Naive thymus-derived CD4-positive, alpha-beta T cell (primary cell): ENCODE measurements at regions of chr7 and their contacts with region 1.

Region 1: GRCh38 chr7:152145853-152146466 is 120.5 kb downstream of the GALNT11 start:
- DNase-seq: peak in 7 of 9 donors; percentile 30 to 60 (median 54)
- ATAC-seq: peak; percentile 63
- H3K4me3 ChIP-seq: no peak overlapping the region
- H3K4me3 Mint-ChIP-seq: peak overlapping the region; percentile 17 to 77 (median 68)
- H3K27ac ChIP-seq: peak overlapping the region; percentile 69
- H3K27ac Mint-ChIP-seq: peak overlapping the region; percentile 88 to 97 (median 93)
- H3K4me1 ChIP-seq: peaks cover 25 to 43% of the 10 kb centered on the region in 2 donors
- H3K4me1 Mint-ChIP-seq: peaks cover 36 to 51% (median 49%) of the 10 kb centered on the region in 7 donors
- H3K27me3 ChIP-seq: no peaks in the 10 kb centered on the region
- H3K27me3 Mint-ChIP-seq: no peaks in the 10 kb centered on the region

Region 2: DNA sequence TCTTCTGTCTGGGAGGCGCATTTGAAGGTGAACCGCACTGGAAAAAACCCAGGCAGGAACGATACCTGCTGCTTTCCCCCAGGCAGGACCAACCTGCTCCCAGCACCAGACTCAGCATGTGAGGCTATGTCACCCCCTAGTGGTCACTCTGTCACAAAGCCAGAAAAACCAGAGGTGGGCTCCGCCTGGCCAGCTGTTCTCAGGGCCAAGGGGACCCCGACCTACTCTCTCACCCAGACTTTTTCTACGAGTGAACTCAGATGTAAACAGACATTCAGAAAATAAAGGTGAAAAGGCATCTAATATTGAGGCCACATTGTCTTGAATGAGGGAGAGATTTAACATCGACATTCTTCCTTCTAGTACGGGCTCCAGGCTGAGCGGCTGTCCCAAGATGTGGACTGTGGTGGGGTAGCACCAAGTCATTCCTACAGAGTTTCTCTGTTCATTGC is 386.3 kb before region 1 on chr7:
- CTCF ChIA-PET with region 1: no interaction called
- POLR2A ChIA-PET with region 1: no interaction called
- intact Hi-C with region 1: loop called in 1 of 2 experiments (anchors 5 kb)
- DNase-seq: peak in 8 of 9 donors; percentile 38 to 67 (median 58)
- ATAC-seq: peak; percentile 67
- H3K4me3 ChIP-seq: no peak overlapping the region
- H3K4me3 Mint-ChIP-seq: no peak overlapping the region
- H3K27ac ChIP-seq: no peak overlapping the region
- H3K27ac Mint-ChIP-seq: peak overlapping the region in 6 of 9 donors; percentile 8 to 83 (median 56)
- H3K4me1 ChIP-seq: peaks cover 12 to 22% of the 10 kb centered on the region in 2 donors
- H3K4me1 Mint-ChIP-seq: peaks cover 17 to 60% (median 33%) of the 10 kb centered on the region in 7 donors
- H3K27me3 ChIP-seq: no peaks in the 10 kb centered on the region
- H3K27me3 Mint-ChIP-seq: no peaks in the 10 kb centered on the region

Region 3: DNA sequence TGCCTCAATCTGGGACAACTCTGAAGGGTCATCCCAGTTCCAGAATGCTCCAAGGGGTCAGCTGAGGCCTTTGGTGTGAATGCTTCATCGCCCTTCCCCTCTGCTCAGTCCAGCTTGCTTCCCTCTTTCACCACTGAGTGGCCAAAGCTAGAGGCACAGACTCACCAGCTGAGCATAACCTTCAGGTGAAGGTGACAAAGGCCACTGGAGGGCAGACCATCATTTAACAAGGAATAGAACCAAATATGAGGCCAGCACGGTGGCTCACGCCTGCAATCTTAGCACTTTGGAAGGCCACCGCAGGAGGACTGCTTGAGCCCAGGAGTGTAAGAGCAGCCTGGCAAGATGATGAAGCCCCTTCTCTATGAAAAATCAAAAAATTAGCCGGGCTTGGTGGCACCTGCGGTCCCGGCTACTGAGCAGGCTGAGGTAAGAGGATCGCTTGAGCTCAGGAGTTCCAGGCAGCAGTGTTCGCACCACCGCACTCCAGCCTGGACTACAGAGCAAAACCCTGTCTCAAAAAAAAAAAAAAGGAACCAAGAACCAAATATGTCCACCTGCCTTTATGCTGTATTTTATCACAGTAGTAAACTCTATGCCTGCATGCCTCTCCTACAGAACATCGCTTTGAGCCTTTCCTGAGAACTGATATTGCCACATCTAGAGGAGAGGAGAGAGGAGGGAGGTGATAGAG is 282.4 kb before region 1 on chr7:
- CTCF ChIA-PET with region 1: no interaction called
- POLR2A ChIA-PET with region 1: no interaction called
- intact Hi-C with region 1: loop called in 1 of 2 experiments (anchors 1 kb)
- DNase-seq: no peak
- ATAC-seq: peak; percentile 35
- H3K4me3 ChIP-seq: no peak overlapping the region
- H3K4me3 Mint-ChIP-seq: no peak overlapping the region
- H3K27ac ChIP-seq: no peak overlapping the region
- H3K27ac Mint-ChIP-seq: peak overlapping the region in 2 of 9 donors; percentile 41 to 51
- H3K4me1 ChIP-seq: no peaks in the 10 kb centered on the region
- H3K4me1 Mint-ChIP-seq: peaks cover 0 to 48% (median 42%) of the 10 kb centered on the region in 7 donors
- H3K27me3 ChIP-seq: no peaks in the 10 kb centered on the region
- H3K27me3 Mint-ChIP-seq: no peaks in the 10 kb centered on the region

Region 4: DNA sequence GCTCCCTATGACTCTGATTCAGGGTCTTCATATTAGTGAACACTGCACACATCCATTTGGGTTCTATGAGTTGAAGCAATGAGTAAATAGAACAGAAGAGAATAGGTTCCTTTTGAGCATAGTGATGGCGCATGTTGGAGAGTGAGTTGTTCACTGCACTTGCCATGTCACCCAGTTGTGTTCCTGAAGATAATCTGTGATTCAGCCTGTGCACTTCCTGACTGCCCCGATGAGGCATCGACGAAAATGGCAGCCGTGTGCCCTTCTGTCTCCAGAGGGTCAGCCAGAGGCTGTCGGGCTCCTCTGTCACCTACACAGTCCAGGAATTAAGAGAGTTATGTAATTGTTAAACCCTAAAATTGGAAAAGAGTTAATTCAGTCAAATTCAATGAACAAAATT is 25.8 kb before region 1 on chr7:
- CTCF ChIA-PET with region 1: no interaction called
- POLR2A ChIA-PET with region 1: no interaction called
- intact Hi-C with region 1: no loop called
- DNase-seq: no peak
- ATAC-seq: no peak
- H3K4me3 ChIP-seq: no peak overlapping the region
- H3K4me3 Mint-ChIP-seq: no peak overlapping the region
- H3K27ac ChIP-seq: no peak overlapping the region
- H3K27ac Mint-ChIP-seq: peak overlapping the region in 3 of 9 donors; percentile 6 to 62 (median 21)
- H3K4me1 ChIP-seq: peaks cover 0 to 3% of the 10 kb centered on the region in 2 donors
- H3K4me1 Mint-ChIP-seq: peaks cover 7 to 23% (median 18%) of the 10 kb centered on the region in 7 donors
- H3K27me3 ChIP-seq: no peaks in the 10 kb centered on the region
- H3K27me3 Mint-ChIP-seq: no peaks in the 10 kb centered on the region

Region 5: GRCh38 chr7:152158801-152159587 is 13.0 kb after region 1 on chr7:
- CTCF ChIA-PET with region 1: interaction called, 3 read pairs
- POLR2A ChIA-PET with region 1: interaction called, 12 read pairs
- intact Hi-C with region 1: loop called in 1 of 2 experiments (anchors 2 kb)
- DNase-seq: no peak
- ATAC-seq: peak; percentile 54
- H3K4me3 ChIP-seq: no peak overlapping the region
- H3K4me3 Mint-ChIP-seq: peak overlapping the region in 9 of 10 donors; percentile 26 to 58 (median 47)
- H3K27ac ChIP-seq: no peak overlapping the region
- H3K27ac Mint-ChIP-seq: peak overlapping the region; percentile 37 to 93 (median 84)
- H3K4me1 ChIP-seq: no peaks in the 10 kb centered on the region
- H3K4me1 Mint-ChIP-seq: peaks cover 8 to 15% (median 12%) of the 10 kb centered on the region in 7 donors
- H3K27me3 ChIP-seq: no peaks in the 10 kb centered on the region
- H3K27me3 Mint-ChIP-seq: no peaks in the 10 kb centered on the region

Region 6: DNA sequence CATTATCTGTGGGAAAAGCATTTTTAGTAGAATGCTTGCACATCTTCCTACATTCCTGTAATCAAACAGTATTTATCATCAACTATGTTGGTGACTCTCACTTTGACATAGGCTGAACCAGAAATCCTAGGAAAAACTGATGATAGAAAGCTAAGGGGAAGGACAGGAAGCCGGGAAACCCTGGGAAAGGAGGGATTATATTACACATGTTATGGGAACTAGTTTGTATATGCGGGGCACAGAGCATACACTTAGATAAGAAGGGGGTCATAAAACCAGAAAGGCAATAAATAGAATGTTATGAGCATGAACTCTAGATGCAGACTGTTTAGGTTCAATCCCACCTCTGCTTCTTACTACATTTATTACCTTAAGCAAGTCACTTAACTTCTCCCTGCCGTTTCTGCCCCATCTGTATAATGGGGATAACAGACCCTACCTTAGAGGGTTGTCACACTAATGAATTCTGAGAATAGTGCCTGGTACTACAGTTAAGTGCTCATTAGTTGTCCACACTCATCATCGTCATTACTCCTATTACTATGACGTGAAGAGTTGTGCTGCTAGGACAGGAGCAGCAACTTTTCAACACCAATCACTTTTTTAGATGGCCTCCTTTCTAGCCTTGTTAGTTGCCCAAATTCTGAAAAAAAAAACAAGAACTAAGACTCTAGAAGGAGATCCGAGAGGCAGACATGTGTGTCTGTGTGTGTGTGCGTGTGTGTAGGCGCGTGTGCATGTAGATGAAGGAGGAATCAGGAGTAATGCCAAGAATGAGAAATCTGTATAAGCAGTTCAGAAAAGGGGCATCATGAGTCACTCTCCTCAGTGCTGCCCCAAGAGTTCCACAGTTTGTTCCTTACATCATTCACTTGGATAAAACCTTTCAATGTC is 237.6 kb after region 1 on chr7:
- CTCF ChIA-PET with region 1: no interaction called
- POLR2A ChIA-PET with region 1: no interaction called
- intact Hi-C with region 1: no loop called
- DNase-seq: no peak
- ATAC-seq: peak; percentile 53
- H3K4me3 ChIP-seq: no peak overlapping the region
- H3K4me3 Mint-ChIP-seq: no peak overlapping the region
- H3K27ac ChIP-seq: no peak overlapping the region
- H3K27ac Mint-ChIP-seq: no peak overlapping the region
- H3K4me1 ChIP-seq: no peaks in the 10 kb centered on the region
- H3K4me1 Mint-ChIP-seq: peaks cover 4 to 37% (median 23%) of the 10 kb centered on the region in 7 donors
- H3K27me3 ChIP-seq: no peaks in the 10 kb centered on the region
- H3K27me3 Mint-ChIP-seq: no peaks in the 10 kb centered on the region

Region 7: DNA sequence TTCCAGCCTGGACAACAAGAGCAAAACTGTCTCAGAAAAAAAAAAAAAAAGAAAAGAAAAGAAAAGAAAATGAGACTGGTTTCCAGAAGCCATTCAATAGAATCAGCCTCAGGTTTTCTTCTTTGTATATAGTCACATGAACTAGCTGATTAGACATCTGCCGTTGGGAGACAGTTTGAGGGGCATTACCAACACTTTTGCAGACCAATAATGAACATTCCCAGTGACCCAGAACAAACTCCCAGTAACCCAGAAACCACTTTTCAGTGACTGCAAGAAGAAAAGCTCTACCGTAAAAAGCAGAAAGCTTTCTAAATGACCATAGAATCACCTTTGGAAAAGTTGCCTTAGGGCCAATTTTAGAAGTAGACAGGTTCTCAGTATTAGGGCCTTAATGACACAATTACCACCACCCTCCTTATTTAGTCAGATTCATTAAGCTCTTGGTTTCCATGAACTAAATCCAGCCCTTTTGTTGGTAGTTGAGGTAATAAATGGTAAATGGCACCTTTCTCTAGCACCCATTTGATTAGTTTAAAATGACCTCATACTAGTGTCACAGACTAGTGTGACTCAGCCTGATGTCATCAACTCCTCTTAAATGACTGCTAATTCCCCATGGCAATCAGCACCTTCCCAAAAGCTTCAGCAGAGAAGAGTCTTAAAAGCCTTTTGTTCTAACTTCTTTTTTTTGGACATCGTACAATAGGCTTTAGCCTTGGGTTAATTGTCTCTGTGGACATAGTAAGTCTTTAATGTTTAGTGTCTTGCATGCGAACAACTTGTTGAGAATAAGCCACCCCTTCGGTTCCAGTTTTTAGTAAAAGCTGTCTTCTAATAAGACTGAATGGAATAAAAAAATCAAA is 563.6 kb after region 1 on chr7:
- CTCF ChIA-PET with region 1: interaction called, 5 read pairs
- POLR2A ChIA-PET with region 1: no interaction called
- intact Hi-C with region 1: loop called in 1 of 2 experiments (anchors 10 kb)
- DNase-seq: no peak
- ATAC-seq: no peak
- H3K4me3 ChIP-seq: no peak overlapping the region
- H3K4me3 Mint-ChIP-seq: no peak overlapping the region
- H3K27ac ChIP-seq: no peak overlapping the region
- H3K27ac Mint-ChIP-seq: no peak overlapping the region
- H3K4me1 ChIP-seq: no peaks in the 10 kb centered on the region
- H3K4me1 Mint-ChIP-seq: peaks cover 0 to 9% (median 3%) of the 10 kb centered on the region in 7 donors
- H3K27me3 ChIP-seq: no peaks in the 10 kb centered on the region
- H3K27me3 Mint-ChIP-seq: peaks cover 0 to 3% (median 0%) of the 10 kb centered on the region in 5 donors